ENCODE measurements at regions of chr15 and their contacts with region 1.

Region 1: GRCh38 chr15:57866149-57866736 is 159.7 kb downstream of the POLR2M start:
- DNase-seq: no peak
- H3K4me3 ChIP-seq: no peak overlapping the region
- H3K27ac ChIP-seq: no peak overlapping the region
- H3K4me1 ChIP-seq: no peaks in the 10 kb centered on the region
- H3K27me3 ChIP-seq: no peaks in the 10 kb centered on the region
- CTCF ChIP-seq: peak; percentile 4 to 61 (median 40)
- POLR2A ChIP-seq: no peak

Region 2: GRCh38 chr15:57561041-57561711 is 305.1 kb before region 1 on chr15:
- intact Hi-C with region 1: loop called (anchors 10 kb)
- DNase-seq: no peak
- H3K4me3 ChIP-seq: no peak overlapping the region
- H3K27ac ChIP-seq: no peak overlapping the region
- H3K4me1 ChIP-seq: peaks cover 15% of the 10 kb centered on the region
- H3K27me3 ChIP-seq: no peaks in the 10 kb centered on the region
- CTCF ChIP-seq: peak; percentile 67 to 88 (median 88)
- POLR2A ChIP-seq: no peak

Region 3: GRCh38 chr15:57667171-57667849 is 198.9 kb before region 1 on chr15:
- intact Hi-C with region 1: loop called (anchors 10 kb)
- DNase-seq: no peak
- H3K4me3 ChIP-seq: no peak overlapping the region
- H3K27ac ChIP-seq: no peak overlapping the region
- H3K4me1 ChIP-seq: peaks cover 3% of the 10 kb centered on the region
- H3K27me3 ChIP-seq: no peaks in the 10 kb centered on the region
- CTCF ChIP-seq: peak in 2 of 3 experiments; percentile 28 to 51
- POLR2A ChIP-seq: no peak

Region 4: DNA sequence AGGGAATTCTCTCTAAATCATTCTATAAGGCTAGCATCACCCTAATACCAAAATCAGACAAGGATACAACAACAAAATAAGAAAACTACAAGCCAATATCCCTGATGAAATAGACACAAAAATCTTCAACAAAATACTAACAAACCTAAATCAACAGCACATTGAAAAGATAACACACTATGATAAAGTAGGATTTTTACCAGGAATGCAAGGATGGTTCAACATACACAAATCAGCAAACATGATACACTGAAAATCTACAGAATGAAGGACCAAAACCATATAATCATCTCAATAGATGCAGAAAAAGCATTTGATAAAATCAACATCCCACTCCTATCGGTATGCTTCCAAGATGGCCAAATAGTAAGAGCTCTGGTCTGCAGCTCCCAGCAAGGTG is 159.8 kb after region 1 on chr15:
- intact Hi-C with region 1: no loop called
- DNase-seq: no peak
- H3K4me3 ChIP-seq: no peak overlapping the region
- H3K27ac ChIP-seq: no peak overlapping the region
- H3K4me1 ChIP-seq: peaks cover 10% of the 10 kb centered on the region
- H3K27me3 ChIP-seq: no peaks in the 10 kb centered on the region
- CTCF ChIP-seq: no peak
- POLR2A ChIP-seq: no peak

Region 5: GRCh38 chr15:58066042-58066867 is 200.0 kb after region 1 on chr15:
- intact Hi-C with region 1: loop called (anchors 5 kb)
- DNase-seq: no peak
- H3K4me3 ChIP-seq: peak overlapping the region; percentile 53 to 66
- H3K27ac ChIP-seq: peak overlapping the region; percentile 81
- H3K4me1 ChIP-seq: peaks cover 18% of the 10 kb centered on the region
- H3K27me3 ChIP-seq: no peaks in the 10 kb centered on the region
- CTCF ChIP-seq: peak; percentile 35 to 82 (median 80)
- POLR2A ChIP-seq: no peak